AG04450 (cell line): ENCODE measurements at regions of chr6 and their contacts with region 1.

Region 1: DNA sequence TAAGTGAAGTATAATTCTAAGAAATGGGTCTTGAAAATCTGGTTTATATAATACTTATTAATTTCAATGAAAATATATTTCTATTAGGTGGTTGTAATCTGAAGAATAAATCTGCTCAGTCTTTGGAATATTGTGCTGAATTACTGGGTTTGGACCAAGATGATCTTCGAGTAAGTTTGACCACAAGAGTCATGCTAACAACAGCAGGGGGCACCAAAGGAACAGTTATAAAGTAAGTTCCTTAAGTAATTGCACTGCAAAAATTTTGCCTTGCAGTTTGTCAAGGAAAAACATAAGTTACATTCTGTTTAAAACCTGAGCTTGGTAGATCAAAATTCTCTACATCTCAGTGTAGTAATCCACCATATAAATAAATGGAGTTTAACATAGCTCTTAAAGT is 106.0 kb downstream of the MYO6 start:
- DNase-seq: peak; percentile 45
- H3K4me3 ChIP-seq: no peak overlapping the region
- H3K27ac ChIP-seq: no peak overlapping the region
- H3K27me3 ChIP-seq: no peaks in the 10 kb centered on the region
- CTCF ChIP-seq: peak; percentile 69

Region 2: GRCh38 chr6:75842191-75842590 is 12.9 kb before region 1 on chr6:
- CTCF ChIA-PET with region 1: interaction called, 11 read pairs
- POLR2A ChIA-PET with region 1: no interaction called
- DNase-seq: peak; percentile 11
- H3K4me3 ChIP-seq: no peak overlapping the region
- H3K27ac ChIP-seq: no peak overlapping the region
- H3K27me3 ChIP-seq: no peaks in the 10 kb centered on the region
- CTCF ChIP-seq: no peak

Region 3: DNA sequence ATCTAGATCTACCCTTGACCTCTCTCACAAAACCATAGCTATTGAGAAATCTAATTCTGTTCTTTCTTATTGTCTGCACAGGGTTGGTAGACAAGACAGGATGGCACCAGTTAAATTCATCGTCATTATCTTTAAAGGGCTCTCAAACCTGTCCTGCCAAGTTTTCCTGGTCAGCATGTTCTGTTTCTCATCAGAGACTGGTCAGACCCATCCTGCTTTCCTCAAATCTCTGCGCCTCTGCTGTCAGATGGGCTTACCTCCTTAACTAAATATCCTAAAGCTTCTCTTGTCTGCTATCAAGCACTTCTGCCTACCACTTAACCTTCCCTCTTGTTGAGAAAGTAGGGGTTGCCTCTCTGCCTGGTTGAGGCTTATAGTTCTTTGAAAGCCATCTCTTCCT is 19.2 kb after region 1 on chr6:
- CTCF ChIA-PET with region 1: interaction called, 23 read pairs
- POLR2A ChIA-PET with region 1: no interaction called
- DNase-seq: no peak
- H3K4me3 ChIP-seq: no peak overlapping the region
- H3K27ac ChIP-seq: no peak overlapping the region
- H3K27me3 ChIP-seq: no peaks in the 10 kb centered on the region
- CTCF ChIP-seq: no peak

Region 4: DNA sequence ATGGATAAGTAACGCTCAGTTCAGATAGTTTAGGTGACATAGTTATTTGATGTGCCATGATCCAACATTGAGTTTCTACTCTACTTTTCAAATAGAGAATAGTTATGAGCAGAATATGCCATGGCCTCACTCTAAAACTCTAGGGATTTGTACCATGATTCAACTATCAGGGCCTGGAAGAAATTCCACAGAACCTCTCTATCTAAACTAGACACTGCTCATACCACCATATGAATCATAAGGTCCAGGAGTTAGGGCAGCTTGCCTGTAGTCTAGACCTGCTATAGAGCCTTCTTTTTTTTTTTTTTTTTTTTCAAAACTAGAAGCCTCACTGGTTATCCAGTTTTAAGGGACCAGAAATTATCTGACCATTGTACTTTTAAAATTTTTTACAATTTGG is 789.2 kb after region 1 on chr6:
- CTCF ChIA-PET with region 1: no interaction called
- POLR2A ChIA-PET with region 1: no interaction called
- DNase-seq: no peak
- H3K4me3 ChIP-seq: no peak overlapping the region
- H3K27ac ChIP-seq: no peak overlapping the region
- H3K27me3 ChIP-seq: no peaks in the 10 kb centered on the region
- CTCF ChIP-seq: no peak